ENCODE measurements at regions of chr6 and their contacts with region 1.

Region 1: GRCh38 chr6:142926494-142927270 is 18.3 kb downstream of the HIVEP2 start:
- DNase-seq: peak; percentile 64 to 94 (median 74)
- ATAC-seq: peak; percentile 78
- H3K4me3 ChIP-seq: peak overlapping the region; percentile 85
- H3K4me3 Mint-ChIP-seq: peak overlapping the region; percentile 95
- H3K27ac ChIP-seq: peak overlapping the region; percentile 98 to 99
- H3K27ac Mint-ChIP-seq: peak overlapping the region; percentile 95
- H3K4me1 ChIP-seq: peaks cover 9% of the 10 kb centered on the region
- H3K4me1 Mint-ChIP-seq: peaks cover 66% of the 10 kb centered on the region
- H3K27me3 ChIP-seq: no peaks in the 10 kb centered on the region
- H3K27me3 Mint-ChIP-seq: no peaks in the 10 kb centered on the region
- CTCF ChIP-seq: no peak

Region 2: GRCh38 chr6:142819603-142820337 is 106.9 kb before region 1 on chr6:
- CTCF ChIA-PET with region 1: no interaction called
- POLR2A ChIA-PET with region 1: interaction called, 16 read pairs
- intact Hi-C with region 1: no loop called
- DNase-seq: peak in 5 of 14 experiments; percentile 13 to 84 (median 75)
- ATAC-seq: peak; percentile 51
- H3K4me3 ChIP-seq: peak overlapping the region; percentile 45
- H3K4me3 Mint-ChIP-seq: peak overlapping the region; percentile 84
- H3K27ac ChIP-seq: peak overlapping the region; percentile 75 to 84
- H3K27ac Mint-ChIP-seq: peak overlapping the region; percentile 82
- H3K4me1 ChIP-seq: peaks cover 52% of the 10 kb centered on the region
- H3K4me1 Mint-ChIP-seq: peaks cover 82% of the 10 kb centered on the region
- H3K27me3 ChIP-seq: no peaks in the 10 kb centered on the region
- H3K27me3 Mint-ChIP-seq: no peaks in the 10 kb centered on the region
- CTCF ChIP-seq: no peak

Region 3: DNA sequence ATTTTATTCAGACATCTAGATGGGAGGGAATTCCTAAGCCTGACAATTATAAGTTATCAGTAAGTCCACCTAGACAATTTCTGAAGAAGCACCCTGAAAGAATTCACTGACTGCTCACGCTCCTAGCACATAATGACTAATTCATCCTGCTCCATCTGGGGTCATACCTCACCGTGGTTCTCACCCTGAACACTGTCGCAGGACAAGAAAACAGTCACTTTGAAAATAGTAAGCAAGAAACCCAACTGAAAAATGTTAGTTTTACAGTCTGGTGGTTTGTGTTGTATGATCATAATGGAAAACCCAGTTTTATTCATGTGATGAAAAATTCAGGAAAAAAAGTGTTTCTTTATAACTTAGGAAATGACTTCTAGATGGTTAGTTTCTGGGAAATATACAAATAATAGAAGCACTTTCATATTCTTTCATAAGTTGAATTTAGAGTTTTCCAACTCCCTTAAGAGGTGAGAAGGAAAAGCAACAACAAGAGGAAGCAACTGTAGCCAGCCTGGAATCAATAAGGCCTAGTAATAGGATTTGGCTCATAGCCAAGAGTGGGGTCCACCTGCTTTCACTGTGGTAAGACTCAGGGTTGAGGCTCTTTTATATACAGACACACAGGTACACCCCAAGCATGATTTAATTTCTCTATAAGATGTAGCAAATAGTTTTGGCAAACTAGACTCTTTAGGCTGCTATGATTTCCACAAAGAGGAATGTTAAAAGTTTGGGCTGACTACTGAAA is 75.8 kb before region 1 on chr6:
- CTCF ChIA-PET with region 1: no interaction called
- POLR2A ChIA-PET with region 1: interaction called, 129 read pairs
- intact Hi-C with region 1: loop called in 1 of 2 experiments (anchors 5 kb)
- DNase-seq: peak in 6 of 14 experiments; percentile 30 to 73 (median 63)
- ATAC-seq: peak; percentile 33
- H3K4me3 ChIP-seq: peak overlapping the region; percentile 2
- H3K4me3 Mint-ChIP-seq: peak overlapping the region; percentile 84
- H3K27ac ChIP-seq: peak overlapping the region; percentile 10 to 43
- H3K27ac Mint-ChIP-seq: peak overlapping the region; percentile 94
- H3K4me1 ChIP-seq: peaks cover 64% of the 10 kb centered on the region
- H3K4me1 Mint-ChIP-seq: peaks cover 96% of the 10 kb centered on the region
- H3K27me3 ChIP-seq: no peaks in the 10 kb centered on the region
- H3K27me3 Mint-ChIP-seq: no peaks in the 10 kb centered on the region
- CTCF ChIP-seq: no peak

Region 4: DNA sequence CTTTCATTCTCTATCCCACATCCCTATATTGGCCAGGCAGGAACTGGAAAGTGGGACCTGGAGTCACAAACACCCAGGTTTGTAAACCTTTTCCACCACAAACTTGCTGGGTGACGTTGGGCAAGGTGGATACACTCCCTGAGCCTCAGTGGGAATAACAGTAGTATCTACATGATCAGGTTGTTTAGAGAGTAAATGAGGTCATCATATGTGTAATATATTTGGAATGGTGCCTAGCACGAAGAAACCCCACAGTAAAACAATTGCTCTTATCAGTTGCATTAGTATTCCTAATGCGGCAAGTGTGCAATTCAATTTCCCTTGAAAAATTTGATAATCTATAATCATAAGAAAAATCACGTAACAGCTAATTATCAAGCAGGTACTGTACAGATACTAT is 33.6 kb before region 1 on chr6:
- CTCF ChIA-PET with region 1: no interaction called
- POLR2A ChIA-PET with region 1: interaction called, 20 read pairs
- intact Hi-C with region 1: no loop called
- DNase-seq: no peak
- ATAC-seq: no peak
- H3K4me3 ChIP-seq: no peak overlapping the region
- H3K4me3 Mint-ChIP-seq: no peak overlapping the region
- H3K27ac ChIP-seq: no peak overlapping the region
- H3K27ac Mint-ChIP-seq: peak overlapping the region; percentile 45
- H3K4me1 ChIP-seq: peaks cover 35% of the 10 kb centered on the region
- H3K4me1 Mint-ChIP-seq: peaks cover 56% of the 10 kb centered on the region
- H3K27me3 ChIP-seq: no peaks in the 10 kb centered on the region
- H3K27me3 Mint-ChIP-seq: no peaks in the 10 kb centered on the region
- CTCF ChIP-seq: no peak

Region 5: DNA sequence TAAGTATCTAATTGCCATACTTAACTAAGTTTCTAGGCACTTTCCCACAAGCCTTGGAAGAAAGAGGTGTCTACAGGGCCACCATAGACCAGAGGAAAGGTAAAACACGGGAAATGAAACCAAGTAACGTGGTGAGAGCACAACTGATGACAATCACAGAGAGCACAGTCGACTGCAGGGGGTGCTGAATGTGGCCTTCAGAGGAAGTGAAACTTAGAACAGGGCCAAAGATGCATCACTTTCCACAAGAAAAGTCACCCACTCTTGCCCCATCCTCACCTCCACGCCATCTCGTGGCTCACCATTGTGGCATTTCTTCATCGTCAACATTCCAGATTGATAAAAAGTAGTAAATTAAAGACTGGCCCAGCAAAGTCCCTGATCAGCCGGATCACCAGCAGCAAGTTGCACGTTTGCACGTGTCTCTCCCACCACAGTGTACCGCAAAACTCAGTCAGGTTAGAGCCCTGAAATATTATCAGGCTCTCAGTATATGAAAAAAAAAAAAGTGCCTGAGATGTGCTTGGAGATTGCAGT is 13.1 kb before region 1 on chr6:
- CTCF ChIA-PET with region 1: interaction called, 6 read pairs
- POLR2A ChIA-PET with region 1: interaction called, 79 read pairs
- intact Hi-C with region 1: loop called in 1 of 2 experiments (anchors 2 kb)
- DNase-seq: peak; percentile 51 to 91 (median 64)
- ATAC-seq: peak; percentile 93
- H3K4me3 ChIP-seq: peak overlapping the region; percentile 41
- H3K4me3 Mint-ChIP-seq: peak overlapping the region; percentile 88
- H3K27ac ChIP-seq: peak overlapping the region; percentile 88 to 90
- H3K27ac Mint-ChIP-seq: peak overlapping the region; percentile 96
- H3K4me1 ChIP-seq: peaks cover 63% of the 10 kb centered on the region
- H3K4me1 Mint-ChIP-seq: peaks cover 89% of the 10 kb centered on the region
- H3K27me3 ChIP-seq: no peaks in the 10 kb centered on the region
- H3K27me3 Mint-ChIP-seq: no peaks in the 10 kb centered on the region
- CTCF ChIP-seq: peak; percentile 42

Measured in CD4-positive, alpha-beta T cell (primary cell).